GM12878 (cell line): ENCODE measurements at regions of chr17 and their contacts with region 1.

Region 1: GRCh38 chr17:62109378-62109902 is 44.4 kb upstream of the MED13 start:
- DNase-seq: peak; percentile 77
- ATAC-seq: peak; percentile 100
- H3K4me3 ChIP-seq: no peak overlapping the region
- H3K27ac ChIP-seq: no peak overlapping the region
- H3K4me1 ChIP-seq: peaks cover 2% of the 10 kb centered on the region; the same call in 1 of the 2 replicates
- H3K27me3 ChIP-seq: no peaks in the 10 kb centered on the region; a peak in 1 of 4 replicates
- CTCF ChIP-seq: peak; percentile 97 to 100 (median 100); a peak in 5 of 6 replicates
- EP300 ChIP-seq: no peak
- POLR2A ChIP-seq: no peak
- RAD21 ChIP-seq: peak; percentile 100

Region 2: DNA sequence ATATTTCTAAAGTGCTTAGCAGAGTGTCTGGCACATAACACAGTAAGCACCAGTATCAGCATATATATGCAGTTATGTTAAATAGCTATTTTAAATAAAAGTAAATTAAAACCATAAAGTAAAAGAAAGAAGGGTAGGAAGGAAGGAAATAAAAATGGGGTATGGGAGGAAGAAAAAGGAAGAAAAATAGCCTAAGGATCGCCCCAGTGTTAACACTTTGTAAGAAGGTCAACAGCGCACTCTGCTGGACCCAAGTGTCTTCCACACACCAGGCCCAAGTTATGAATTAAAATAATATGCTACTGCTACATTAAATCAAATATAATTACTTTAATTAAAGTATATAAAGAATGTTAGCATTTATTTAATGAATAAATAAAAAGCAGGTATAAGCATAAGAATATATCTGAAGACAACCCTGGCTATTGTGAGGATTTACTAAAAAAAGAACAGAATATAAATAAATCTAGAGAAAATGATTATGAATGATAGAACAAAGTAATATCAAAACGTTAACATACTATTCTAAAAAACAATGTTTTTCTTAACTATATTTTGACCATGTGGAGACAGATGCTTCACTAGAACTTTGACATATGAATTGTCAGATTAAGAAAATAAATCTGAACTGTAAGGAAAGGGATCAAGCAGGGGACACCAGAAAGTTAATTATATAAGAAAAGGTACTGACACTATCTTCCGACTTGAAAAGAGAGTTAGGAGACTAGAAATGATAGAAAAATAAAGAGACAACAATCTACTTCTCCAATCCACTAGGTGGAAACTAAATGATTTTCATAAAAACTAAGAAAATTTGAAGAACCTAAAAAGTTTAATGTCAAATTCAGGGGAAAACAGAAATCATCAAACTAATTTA is 272.0 kb before region 1 on chr17:
- CTCF ChIA-PET with region 1: interaction called, 28 read pairs
- POLR2A ChIA-PET with region 1: interaction called, 5 read pairs
- RAD21 ChIA-PET with region 1: interaction called, 57 read pairs
- SMC1A ChIA-PET with region 1: interaction called, 24 read pairs
- in situ Hi-C with region 1: no loop called
- intact Hi-C with region 1: no loop called
- DNase-seq: peak; percentile 17
- ATAC-seq: peak; percentile 86
- H3K4me3 ChIP-seq: no peak overlapping the region
- H3K27ac ChIP-seq: no peak overlapping the region
- H3K4me1 ChIP-seq: no peaks in the 10 kb centered on the region
- H3K27me3 ChIP-seq: no peaks in the 10 kb centered on the region
- CTCF ChIP-seq: peak; percentile 74 to 78 (median 74)
- EP300 ChIP-seq: no peak
- POLR2A ChIP-seq: no peak
- RAD21 ChIP-seq: peak; percentile 91

Region 3: GRCh38 chr17:61904094-61904710 is 205.2 kb before region 1 on chr17:
- CTCF ChIA-PET with region 1: interaction called, 32 read pairs
- POLR2A ChIA-PET with region 1: no interaction called
- RAD21 ChIA-PET with region 1: interaction called, 27 read pairs
- SMC1A ChIA-PET with region 1: interaction called, 15 read pairs
- in situ Hi-C with region 1: no loop called
- intact Hi-C with region 1: no loop called
- DNase-seq: peak; percentile 25
- ATAC-seq: peak; percentile 89
- H3K4me3 ChIP-seq: no peak overlapping the region
- H3K27ac ChIP-seq: peak overlapping the region; percentile 64
- H3K4me1 ChIP-seq: no peaks in the 10 kb centered on the region
- H3K27me3 ChIP-seq: no peaks in the 10 kb centered on the region
- CTCF ChIP-seq: no peak
- EP300 ChIP-seq: no peak
- POLR2A ChIP-seq: no peak
- RAD21 ChIP-seq: no peak

Region 4: GRCh38 chr17:61986898-61987297 is 122.5 kb before region 1 on chr17:
- CTCF ChIA-PET with region 1: interaction called, 22 read pairs
- POLR2A ChIA-PET with region 1: no interaction called
- RAD21 ChIA-PET with region 1: interaction called, 19 read pairs
- SMC1A ChIA-PET with region 1: interaction called, 9 read pairs
- in situ Hi-C with region 1: no loop called
- intact Hi-C with region 1: no loop called
- DNase-seq: no peak
- ATAC-seq: no peak
- H3K4me3 ChIP-seq: no peak overlapping the region
- H3K27ac ChIP-seq: no peak overlapping the region
- H3K4me1 ChIP-seq: no peaks in the 10 kb centered on the region
- H3K27me3 ChIP-seq: no peaks in the 10 kb centered on the region
- CTCF ChIP-seq: no peak
- EP300 ChIP-seq: no peak
- POLR2A ChIP-seq: no peak
- RAD21 ChIP-seq: no peak

Region 5: GRCh38 chr17:62045109-62045905 is 64.1 kb before region 1 on chr17:
- CTCF ChIA-PET with region 1: interaction called, 18 read pairs
- POLR2A ChIA-PET with region 1: no interaction called
- RAD21 ChIA-PET with region 1: interaction called, 11 read pairs
- SMC1A ChIA-PET with region 1: interaction called, 39 read pairs
- in situ Hi-C with region 1: no loop called
- intact Hi-C with region 1: no loop called
- DNase-seq: no peak
- ATAC-seq: peak; percentile 71
- H3K4me3 ChIP-seq: no peak overlapping the region
- H3K27ac ChIP-seq: no peak overlapping the region
- H3K4me1 ChIP-seq: no peaks in the 10 kb centered on the region
- H3K27me3 ChIP-seq: no peaks in the 10 kb centered on the region
- CTCF ChIP-seq: no peak
- EP300 ChIP-seq: no peak
- POLR2A ChIP-seq: no peak
- RAD21 ChIP-seq: no peak

Region 6: GRCh38 chr17:62093188-62094155 is 16.0 kb before region 1 on chr17:
- CTCF ChIA-PET with region 1: interaction called, 183 read pairs
- POLR2A ChIA-PET with region 1: interaction called, 5 read pairs
- RAD21 ChIA-PET with region 1: interaction called, 134 read pairs
- SMC1A ChIA-PET with region 1: interaction called, 139 read pairs
- in situ Hi-C with region 1: no loop called
- intact Hi-C with region 1: no loop called
- DNase-seq: peak; percentile 90
- ATAC-seq: peak; percentile 96
- H3K4me3 ChIP-seq: peak overlapping the region; percentile 56; the same call in 1 of the 2 replicates
- H3K27ac ChIP-seq: peak overlapping the region; percentile 74
- H3K4me1 ChIP-seq: peaks cover 37% of the 10 kb centered on the region
- H3K27me3 ChIP-seq: no peaks in the 10 kb centered on the region
- CTCF ChIP-seq: no peak
- EP300 ChIP-seq: peak; percentile 65 to 94; a peak in 3 of 4 replicates
- POLR2A ChIP-seq: peak; percentile 26; the same call in 1 of the 2 replicates
- RAD21 ChIP-seq: no peak